K562 (cell line): ENCODE measurements at regions of chr4 and their contacts with region 1.

Region 1: GRCh38 chr4:40086421-40086820 is 29.8 kb downstream of the N4BP2 start:
- DNase-seq: no peak
- ATAC-seq: no peak
- H3K4me3 ChIP-seq: no peak overlapping the region
- H3K27ac ChIP-seq: no peak overlapping the region
- H3K4me1 ChIP-seq: no peaks in the 10 kb centered on the region
- H3K27me3 ChIP-seq: no peaks in the 10 kb centered on the region
- CTCF ChIP-seq: no peak
- EP300 ChIP-seq: no peak
- POLR2A ChIP-seq: no peak
- RAD21 ChIP-seq: no peak

Region 2: GRCh38 chr4:40316782-40317635 is 230.6 kb after region 1 on chr4:
- CTCF ChIA-PET with region 1: no interaction called
- POLR2A ChIA-PET with region 1: interaction called, 10 read pairs
- in situ Hi-C with region 1: no loop called
- intact Hi-C with region 1: no loop called
- DNase-seq: peak; percentile 63 to 87 (median 68)
- ATAC-seq: peak; percentile 85
- H3K4me3 ChIP-seq: no peak overlapping the region
- H3K27ac ChIP-seq: peak overlapping the region; percentile 61
- H3K4me1 ChIP-seq: peaks cover 12 to 37% of the 10 kb centered on the region in 2 experiments
- H3K27me3 ChIP-seq: no peaks in the 10 kb centered on the region
- CTCF ChIP-seq: peak; percentile 74 to 90 (median 80)
- EP300 ChIP-seq: peak; percentile 22; the same call in 1 of the 2 replicates
- POLR2A ChIP-seq: no peak
- RAD21 ChIP-seq: peak; percentile 51 to 65